Head of caudate nucleus (tissue), 42 donors: ENCODE measurements at regions of chr6 and their contacts with region 1.

Region 1: DNA sequence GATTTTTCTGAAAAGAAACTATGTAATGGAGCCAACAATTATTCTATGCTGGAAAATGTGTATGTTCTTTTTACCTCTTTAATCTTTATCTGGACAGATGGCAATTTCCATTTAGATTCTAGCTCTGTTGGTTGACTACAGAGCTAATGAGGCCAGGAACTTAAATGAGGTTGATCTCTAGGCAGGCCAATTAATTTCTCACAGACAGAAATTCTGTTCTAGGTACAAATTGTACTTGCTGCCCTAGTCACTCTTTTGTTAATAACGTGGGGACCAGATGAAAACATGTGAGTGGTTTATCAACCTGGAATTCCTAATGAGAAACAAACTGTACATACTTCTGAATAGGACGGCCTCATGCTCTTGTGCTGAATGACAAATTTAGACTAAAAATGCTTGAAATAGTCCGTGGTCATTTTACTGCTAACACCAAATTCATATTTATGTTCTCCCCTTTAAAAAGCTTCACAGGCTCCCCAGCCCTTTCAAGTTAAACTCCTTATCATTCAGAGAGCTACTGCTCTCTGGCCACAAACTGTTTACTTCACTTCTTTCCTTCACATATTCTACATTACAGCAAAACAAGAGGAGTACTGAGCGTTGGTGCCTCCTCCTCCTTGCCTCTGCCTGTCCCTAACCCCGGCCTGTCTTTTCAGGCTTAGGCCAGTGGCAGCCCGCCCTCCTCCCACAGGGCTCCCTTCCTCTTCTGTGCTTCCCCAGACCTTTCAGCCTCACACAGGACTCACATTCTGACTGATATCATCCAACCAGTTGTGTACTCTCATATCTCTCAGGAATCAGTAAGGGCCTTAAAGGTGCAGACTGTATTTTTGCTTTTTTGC is 41.4 kb downstream of the DTNBP1 start:
- DNase-seq: peak in 17 of 42 donors; percentile 10 to 57 (median 33)

Region 2: GRCh38 chr6:15512126-15512525 is 109.3 kb before region 1 on chr6:
- intact Hi-C with region 1: loop called (anchors 10 kb)
- DNase-seq: peak in 33 of 42 donors; percentile 30 to 77 (median 54)